ENCODE measurements at regions of chr12 and their contacts with region 1.

Region 1: GRCh38 chr12:66269757-66270383 is 32.4 kb upstream of the HELB start:
- DNase-seq: no peak
- ATAC-seq: peak; percentile 61

Region 2: GRCh38 chr12:66693901-66694675 is 424.2 kb after region 1 on chr12:
- intact Hi-C with region 1: loop called (anchors 10 kb)
- DNase-seq: no peak
- ATAC-seq: peak; percentile 80

Measured in Right ventricle myocardium superior (tissue), 1 donor.